ENCODE measurements at regions of chr1 and their contacts with region 1.

Region 1: GRCh38 chr1:4689271-4689935 is 35.0 kb downstream of the AJAP1 start:
- DNase-seq: no peak
- H3K4me3 ChIP-seq: no peak overlapping the region
- H3K27ac ChIP-seq: no peak overlapping the region
- H3K4me1 ChIP-seq: no peaks in the 10 kb centered on the region
- H3K27me3 ChIP-seq: no peaks in the 10 kb centered on the region
- CTCF ChIP-seq: no peak
- POLR2A ChIP-seq: no peak

Region 2: DNA sequence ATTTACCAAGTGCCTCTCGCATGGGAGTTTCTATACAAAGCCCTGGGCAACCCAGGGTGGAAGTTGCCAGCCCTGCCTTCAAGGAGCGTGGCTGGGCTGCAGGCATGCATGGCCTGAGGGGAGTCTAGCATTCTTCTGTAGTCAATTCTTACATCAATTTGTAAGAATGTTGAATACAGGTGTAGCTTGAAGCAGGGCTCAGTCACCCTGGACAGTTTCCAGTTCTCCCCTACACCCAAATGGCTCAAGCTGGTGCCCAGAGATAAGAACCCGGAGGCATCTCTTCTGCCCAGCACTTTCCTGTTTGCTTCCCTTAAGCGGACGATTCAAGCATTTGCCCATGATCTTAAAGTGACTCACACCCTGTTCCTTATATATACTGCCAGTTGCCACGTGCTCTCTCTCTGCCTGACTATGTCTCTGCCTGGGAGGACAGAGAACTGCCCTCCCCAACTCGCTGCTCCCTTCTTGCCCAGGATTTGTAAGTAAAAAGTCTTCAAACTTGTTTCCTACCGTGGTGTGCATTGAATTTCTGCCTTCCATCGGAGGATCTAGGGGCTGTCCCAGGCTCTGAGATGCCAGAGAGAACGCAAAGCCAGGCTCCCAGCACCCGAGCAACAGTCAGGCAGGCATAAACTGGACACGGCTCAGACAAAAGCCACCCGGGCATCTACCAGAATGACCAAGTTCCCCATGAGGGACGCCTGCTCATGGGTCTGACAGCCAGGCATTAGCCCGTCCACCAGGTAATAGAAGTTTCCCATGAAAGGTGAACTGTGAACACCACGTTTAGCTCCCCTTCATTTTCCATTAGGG is 85.9 kb before region 1 on chr1:
- intact Hi-C with region 1: no loop called
- DNase-seq: no peak
- H3K4me3 ChIP-seq: no peak overlapping the region
- H3K27ac ChIP-seq: no peak overlapping the region
- H3K4me1 ChIP-seq: no peaks in the 10 kb centered on the region
- H3K27me3 ChIP-seq: no peaks in the 10 kb centered on the region
- CTCF ChIP-seq: no peak
- POLR2A ChIP-seq: no peak

Region 3: DNA sequence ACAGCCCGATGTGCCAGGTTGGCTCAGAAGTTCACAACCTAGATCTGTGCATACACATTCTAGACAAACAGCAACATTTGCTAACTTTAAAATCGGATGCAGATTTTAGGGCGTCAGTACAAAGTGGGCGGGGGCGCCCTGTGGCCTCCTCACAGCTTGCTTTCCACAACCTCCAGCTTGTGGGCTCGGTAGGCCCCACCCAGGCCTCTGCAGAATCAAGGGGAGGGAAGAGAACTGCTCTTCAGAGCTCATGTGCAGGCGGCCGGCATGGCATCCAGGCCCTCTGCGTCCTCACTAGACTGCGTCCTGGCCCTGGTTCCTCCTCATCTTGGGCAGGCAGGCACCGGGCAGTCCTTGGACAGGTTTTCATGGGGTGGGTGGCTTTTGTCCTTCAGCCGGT is 24.3 kb after region 1 on chr1:
- intact Hi-C with region 1: loop called (anchors 1 kb)
- DNase-seq: no peak
- H3K4me3 ChIP-seq: no peak overlapping the region
- H3K27ac ChIP-seq: no peak overlapping the region
- H3K4me1 ChIP-seq: no peaks in the 10 kb centered on the region
- H3K27me3 ChIP-seq: no peaks in the 10 kb centered on the region
- CTCF ChIP-seq: no peak
- POLR2A ChIP-seq: no peak

Measured in vagina (tissue), 2 donors.